ENCODE measurements at regions of chr9 and their contacts with region 1.

Region 1: DNA sequence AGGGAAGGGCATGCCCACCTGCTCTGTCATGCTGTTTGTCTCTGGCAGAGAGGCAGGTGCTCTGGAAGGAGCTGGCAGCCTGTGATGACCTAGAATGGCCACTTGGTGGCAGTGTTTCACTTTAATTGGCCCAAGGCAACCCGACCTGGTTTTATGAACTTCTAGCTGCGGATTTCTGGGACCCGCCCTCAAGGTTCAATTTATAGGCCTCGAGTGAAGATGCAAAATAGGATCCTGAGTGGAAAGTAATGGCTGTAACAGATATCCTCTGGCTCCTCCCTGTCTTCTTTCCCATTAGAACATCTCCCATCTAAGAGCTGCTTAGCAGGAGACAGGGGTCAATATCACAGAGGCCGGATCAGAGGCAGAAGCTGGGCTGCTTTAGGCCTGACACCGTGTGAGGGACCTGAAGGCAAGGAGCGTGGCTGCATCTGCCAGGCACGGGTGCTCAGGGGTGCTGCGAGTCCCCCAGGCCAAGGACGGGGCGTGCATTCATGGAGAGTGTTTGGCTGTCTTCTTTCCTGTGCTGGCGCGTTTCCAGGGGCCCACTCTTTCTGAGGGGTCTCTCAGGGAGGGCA is 56.7 kb upstream of the SLC28A3 start:
- DNase-seq: peak; percentile 50 to 76 (median 71)
- H3K4me3 ChIP-seq: no peak overlapping the region
- H3K27ac ChIP-seq: no peak overlapping the region
- H3K4me1 ChIP-seq: no peaks in the 10 kb centered on the region
- H3K27me3 ChIP-seq: no peaks in the 10 kb centered on the region
- CTCF ChIP-seq: peak; percentile 71 to 93 (median 77)
- EP300 ChIP-seq: no peak
- POLR2A ChIP-seq: no peak

Region 2: GRCh38 chr9:84285381-84285780 is 111.9 kb before region 1 on chr9:
- intact Hi-C with region 1: no loop called
- DNase-seq: no peak
- H3K4me3 ChIP-seq: no peak overlapping the region
- H3K27ac ChIP-seq: no peak overlapping the region
- H3K4me1 ChIP-seq: peaks cover 2% of the 10 kb centered on the region
- H3K27me3 ChIP-seq: no peaks in the 10 kb centered on the region
- CTCF ChIP-seq: no peak
- EP300 ChIP-seq: no peak
- POLR2A ChIP-seq: no peak

Region 3: DNA sequence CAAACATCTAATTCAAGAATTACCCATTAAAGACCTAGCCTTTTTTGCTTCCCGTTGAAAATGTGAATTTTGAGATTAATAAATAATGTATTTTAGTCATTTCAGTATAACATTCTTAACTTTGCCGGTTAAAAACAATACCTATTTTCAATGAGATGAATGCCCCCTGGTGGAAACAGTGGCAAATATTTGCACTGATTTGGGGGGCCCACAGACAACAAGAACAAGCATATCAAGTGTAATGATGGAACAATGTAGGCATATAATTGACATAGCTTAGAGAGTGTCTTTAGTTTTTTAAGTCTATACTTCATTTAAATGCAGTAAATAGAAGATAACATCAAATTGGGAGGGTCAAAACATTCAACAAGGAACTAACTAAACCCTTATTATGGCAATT is 384.2 kb after region 1 on chr9:
- intact Hi-C with region 1: loop called in 3 of 4 experiments (anchors 10 kb)
- DNase-seq: peak in 3 of 5 donors; percentile 28 to 37 (median 31)
- H3K4me3 ChIP-seq: no peak overlapping the region
- H3K27ac ChIP-seq: no peak overlapping the region
- H3K4me1 ChIP-seq: no peaks in the 10 kb centered on the region
- H3K27me3 ChIP-seq: no peaks in the 10 kb centered on the region
- CTCF ChIP-seq: peak; percentile 22 to 51 (median 28)
- EP300 ChIP-seq: no peak
- POLR2A ChIP-seq: no peak

Region 4: DNA sequence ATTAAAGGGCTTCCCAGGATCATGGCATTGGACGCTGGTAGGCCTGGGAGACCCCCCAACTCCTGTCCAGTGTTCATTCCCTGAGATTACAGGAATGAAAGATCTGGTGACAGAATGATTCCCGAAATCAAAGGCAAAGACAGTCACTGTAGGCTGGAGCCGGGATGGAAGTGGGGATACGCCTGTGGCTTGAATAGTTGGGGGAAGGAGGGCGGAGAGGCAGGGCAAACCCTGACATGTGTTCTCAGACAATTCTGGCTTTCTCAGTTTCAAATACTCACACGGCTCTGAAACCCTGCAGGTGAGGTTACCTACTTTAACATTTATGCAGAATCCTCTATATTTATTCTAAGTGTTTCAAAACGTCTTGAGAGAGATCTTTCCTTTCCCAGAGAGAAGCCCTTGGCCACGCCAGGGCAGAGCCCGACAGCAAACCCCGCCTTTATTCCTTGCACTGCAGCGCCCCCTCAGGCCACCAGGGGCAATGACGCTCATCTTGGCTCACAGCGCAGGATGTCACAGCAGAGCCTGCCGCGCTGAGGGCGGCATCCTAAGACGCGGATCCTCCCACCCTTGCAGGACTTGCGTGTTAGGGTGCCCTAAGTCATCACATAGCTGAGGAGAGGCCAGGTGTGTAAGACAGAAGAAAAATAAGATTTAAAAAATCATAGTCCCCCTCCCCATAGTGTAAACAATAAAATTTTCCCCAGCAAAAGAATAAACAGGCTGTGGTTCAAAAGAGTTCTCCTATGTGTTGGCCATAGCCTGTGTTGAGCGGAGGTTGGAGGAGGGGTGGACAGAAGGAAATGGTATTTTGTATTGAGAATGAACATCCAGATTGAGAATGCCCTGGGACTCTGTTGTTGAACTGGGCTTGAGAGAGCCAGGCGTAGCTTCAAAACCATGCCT is 556.8 kb after region 1 on chr9:
- intact Hi-C with region 1: loop called in 3 of 4 experiments (anchors 5 to 10 kb)
- DNase-seq: peak; percentile 62 to 87 (median 81)
- H3K4me3 ChIP-seq: no peak overlapping the region
- H3K27ac ChIP-seq: no peak overlapping the region
- H3K4me1 ChIP-seq: no peaks in the 10 kb centered on the region
- H3K27me3 ChIP-seq: no peaks in the 10 kb centered on the region
- CTCF ChIP-seq: peak; percentile 59 to 71 (median 71)
- EP300 ChIP-seq: no peak
- POLR2A ChIP-seq: no peak

Region 5: GRCh38 chr9:85142968-85143367 is 745.7 kb after region 1 on chr9:
- intact Hi-C with region 1: loop called in 1 of 4 experiments (anchors 10 kb)
- DNase-seq: no peak
- H3K4me3 ChIP-seq: no peak overlapping the region
- H3K27ac ChIP-seq: no peak overlapping the region
- H3K4me1 ChIP-seq: no peaks in the 10 kb centered on the region
- H3K27me3 ChIP-seq: no peaks in the 10 kb centered on the region
- CTCF ChIP-seq: no peak
- EP300 ChIP-seq: no peak
- POLR2A ChIP-seq: no peak

Region 6: GRCh38 chr9:85600675-85601263 is 1203.5 kb after region 1 on chr9:
- intact Hi-C with region 1: loop called in 2 of 4 experiments (anchors 10 kb)
- DNase-seq: no peak
- H3K4me3 ChIP-seq: no peak overlapping the region
- H3K27ac ChIP-seq: no peak overlapping the region
- H3K4me1 ChIP-seq: no peaks in the 10 kb centered on the region
- H3K27me3 ChIP-seq: no peaks in the 10 kb centered on the region
- CTCF ChIP-seq: no peak
- EP300 ChIP-seq: no peak
- POLR2A ChIP-seq: no peak